Mammary epithelial cell (primary cell): ENCODE measurements at regions of chr6 and their contacts with region 1.

Region 1: GRCh38 chr6:169831450-169832246 is 80.2 kb downstream of the ERMARD start:
- DNase-seq: peak; percentile 40
- H3K4me3 ChIP-seq: no peak overlapping the region
- H3K27ac ChIP-seq: no peak overlapping the region
- H3K4me1 ChIP-seq: peaks cover 20% of the 10 kb centered on the region
- H3K27me3 ChIP-seq: no peaks in the 10 kb centered on the region
- CTCF ChIP-seq: peak; percentile 89 to 90

Region 2: GRCh38 chr6:169774347-169774746 is 57.3 kb before region 1 on chr6:
- CTCF ChIA-PET with region 1: no interaction called
- dilution Hi-C with region 1: no loop called
- in situ Hi-C with region 1: no loop called
- intact Hi-C with region 1: no loop called
- DNase-seq: no peak
- H3K4me3 ChIP-seq: no peak overlapping the region
- H3K27ac ChIP-seq: no peak overlapping the region
- H3K4me1 ChIP-seq: peaks cover 16% of the 10 kb centered on the region
- H3K27me3 ChIP-seq: no peaks in the 10 kb centered on the region
- CTCF ChIP-seq: no peak

Region 3: DNA sequence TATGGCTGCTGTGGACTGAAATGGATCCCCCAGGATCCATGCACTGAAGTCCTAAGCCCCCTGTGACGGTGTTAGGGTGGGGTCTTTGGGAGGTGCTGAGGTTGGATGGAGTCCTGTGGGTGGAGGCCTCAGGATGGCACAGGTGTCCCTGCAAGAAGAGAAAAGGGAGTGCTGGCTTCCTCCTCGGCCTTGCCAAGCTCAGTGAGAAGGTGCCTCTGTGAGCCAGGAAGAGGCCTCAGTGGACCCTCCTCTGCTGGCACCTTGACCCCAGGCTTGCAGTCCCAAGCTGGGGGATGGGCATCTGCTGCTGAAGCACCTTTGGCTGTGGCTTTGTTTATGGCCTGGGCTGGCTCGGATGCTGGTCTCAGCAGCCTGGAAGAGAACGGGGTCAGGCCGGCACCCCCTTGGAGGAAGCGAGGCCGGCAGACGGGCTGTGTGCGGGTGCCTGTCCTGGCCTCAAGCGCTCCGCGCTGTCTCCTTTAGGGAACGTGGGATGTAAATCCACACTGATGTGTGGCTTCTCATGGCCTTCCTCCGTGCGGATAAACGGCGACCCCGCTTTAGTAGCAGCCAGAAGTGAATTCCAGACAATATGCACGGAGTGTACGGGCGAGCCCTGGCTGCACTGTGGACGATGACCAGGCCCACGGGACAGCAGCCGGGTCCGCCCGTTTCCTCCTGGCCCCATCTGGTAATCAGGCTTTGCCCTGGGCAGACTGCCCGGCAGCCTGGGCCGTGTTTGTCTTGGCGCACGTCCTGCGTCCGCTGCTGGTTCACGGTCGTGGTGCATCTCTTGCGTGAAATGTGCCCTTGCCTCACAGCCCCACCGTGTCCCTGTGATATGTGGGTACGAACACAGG is 102.4 kb after region 1 on chr6:
- CTCF ChIA-PET with region 1: no interaction called
- dilution Hi-C with region 1: no loop called
- in situ Hi-C with region 1: no loop called
- intact Hi-C with region 1: loop called (anchors 1 kb)
- DNase-seq: no peak
- H3K4me3 ChIP-seq: no peak overlapping the region
- H3K27ac ChIP-seq: no peak overlapping the region
- H3K4me1 ChIP-seq: no peaks in the 10 kb centered on the region
- H3K27me3 ChIP-seq: no peaks in the 10 kb centered on the region
- CTCF ChIP-seq: no peak

Region 4: GRCh38 chr6:170152989-170153388 is 321.3 kb after region 1 on chr6:
- CTCF ChIA-PET with region 1: no interaction called
- dilution Hi-C with region 1: no loop called
- in situ Hi-C with region 1: no loop called
- intact Hi-C with region 1: loop called (anchors 10 kb)
- DNase-seq: peak; percentile 49
- H3K4me3 ChIP-seq: no peak overlapping the region
- H3K27ac ChIP-seq: no peak overlapping the region
- H3K4me1 ChIP-seq: peaks cover 12% of the 10 kb centered on the region
- H3K27me3 ChIP-seq: no peaks in the 10 kb centered on the region
- CTCF ChIP-seq: no peak

Region 5: DNA sequence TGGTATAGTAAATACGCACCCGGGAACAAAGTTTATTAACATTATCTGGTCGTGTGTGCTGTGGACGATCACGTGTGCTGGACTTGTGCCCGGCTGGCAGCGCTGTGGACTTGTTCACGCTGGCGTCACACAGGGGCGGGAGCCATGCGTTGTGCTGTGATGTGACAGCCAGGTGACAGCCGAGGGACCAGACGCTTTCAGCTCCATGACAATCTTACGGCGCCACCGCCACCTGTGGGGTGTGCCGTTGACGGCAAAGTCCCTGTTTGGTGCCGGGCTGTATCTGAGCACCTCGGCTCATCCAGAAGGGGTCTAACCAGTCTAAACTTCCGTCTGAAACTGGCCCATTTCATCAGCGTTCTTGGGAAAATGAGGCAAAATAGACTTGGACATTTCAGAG is 434.0 kb after region 1 on chr6:
- CTCF ChIA-PET with region 1: no interaction called
- dilution Hi-C with region 1: loop called (anchors 10 kb)
- in situ Hi-C with region 1: no loop called
- intact Hi-C with region 1: no loop called
- DNase-seq: no peak
- H3K4me3 ChIP-seq: no peak overlapping the region
- H3K27ac ChIP-seq: no peak overlapping the region
- H3K4me1 ChIP-seq: no peaks in the 10 kb centered on the region
- H3K27me3 ChIP-seq: no peaks in the 10 kb centered on the region
- CTCF ChIP-seq: no peak

Region 6: GRCh38 chr6:170371588-170371987 is 539.9 kb after region 1 on chr6:
- CTCF ChIA-PET with region 1: no interaction called
- dilution Hi-C with region 1: no loop called
- in situ Hi-C with region 1: no loop called
- intact Hi-C with region 1: loop called (anchors 10 kb)
- DNase-seq: no peak
- H3K4me3 ChIP-seq: no peak overlapping the region
- H3K27ac ChIP-seq: no peak overlapping the region
- H3K4me1 ChIP-seq: peaks cover 12% of the 10 kb centered on the region
- H3K27me3 ChIP-seq: no peaks in the 10 kb centered on the region
- CTCF ChIP-seq: no peak